Thyroid gland (tissue), 4 donors: ENCODE measurements at regions of chr12 and their contacts with region 1.

Region 1: GRCh38 chr12:7142056-7142644 is 12.0 kb downstream of the CLSTN3 start:
- DNase-seq: peak; percentile 48 to 51
- H3K4me3 ChIP-seq: no peak overlapping the region
- H3K27ac ChIP-seq: no peak overlapping the region
- H3K4me1 ChIP-seq: no peaks in the 10 kb centered on the region
- H3K27me3 ChIP-seq: no peaks in the 10 kb centered on the region
- CTCF ChIP-seq: peak in 5 of 6 experiments; percentile 27 to 63 (median 46)
- POLR2A ChIP-seq: no peak

Region 2: DNA sequence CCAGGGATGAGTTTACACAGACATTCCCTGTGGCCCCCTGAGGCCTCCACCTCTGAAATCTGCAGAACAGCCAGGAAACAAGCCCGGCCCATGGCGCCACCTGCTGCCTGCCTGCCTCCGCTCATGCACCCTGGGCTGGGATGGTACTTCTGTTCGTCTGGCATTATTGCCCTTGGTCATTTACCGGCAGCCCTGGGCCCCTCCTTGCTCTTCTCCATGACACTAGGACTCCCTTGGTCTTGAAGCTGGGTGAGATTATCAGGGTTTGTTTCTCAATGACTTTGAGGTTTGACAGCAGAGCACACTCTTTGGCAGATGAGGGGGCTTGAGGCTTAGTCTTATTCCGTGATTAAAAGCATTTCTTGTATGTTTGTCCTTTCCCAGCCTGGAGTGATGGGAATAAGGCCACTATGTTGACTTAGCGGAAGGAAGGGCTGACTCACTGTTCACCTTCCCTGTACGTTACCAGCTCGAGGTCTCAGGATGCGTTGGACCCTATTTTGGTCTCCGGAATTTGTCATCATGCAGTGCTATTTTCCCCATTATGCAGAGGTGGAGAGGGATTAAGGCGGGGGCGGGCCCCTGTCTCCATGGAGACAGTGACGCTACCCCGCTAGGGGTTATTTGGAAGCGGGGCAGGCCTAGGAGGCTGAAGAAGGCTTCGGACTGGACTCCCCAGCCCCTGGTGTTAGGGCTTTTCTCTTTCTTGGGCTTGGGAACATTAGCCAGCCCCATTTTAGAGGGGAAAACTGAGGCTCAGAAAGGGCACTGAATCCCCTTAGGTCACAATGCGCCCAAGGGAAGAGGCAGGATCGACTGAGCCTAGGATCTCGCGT is 46.6 kb after region 1 on chr12:
- intact Hi-C with region 1: loop called (anchors 5 kb)
- DNase-seq: peak; percentile 69 to 70
- H3K4me3 ChIP-seq: peak overlapping the region; percentile 59 to 94 (median 74)
- H3K27ac ChIP-seq: peak overlapping the region; percentile 81 to 94 (median 92)
- H3K4me1 ChIP-seq: peaks cover 4 to 21% of the 10 kb centered on the region in 2 donors
- H3K27me3 ChIP-seq: no peaks in the 10 kb centered on the region
- CTCF ChIP-seq: peak in 5 of 6 experiments; percentile 43 to 62 (median 53)
- POLR2A ChIP-seq: peak in 1 of 2 donors; percentile 4

Region 3: GRCh38 chr12:7293670-7294069 is 151.5 kb after region 1 on chr12:
- intact Hi-C with region 1: no loop called
- DNase-seq: no peak
- H3K4me3 ChIP-seq: no peak overlapping the region
- H3K27ac ChIP-seq: no peak overlapping the region
- H3K4me1 ChIP-seq: no peaks in the 10 kb centered on the region
- H3K27me3 ChIP-seq: no peaks in the 10 kb centered on the region
- CTCF ChIP-seq: no peak
- POLR2A ChIP-seq: no peak